Natural killer cell (primary cell): ENCODE measurements at regions of chr5 and their contacts with region 1.

Region 1: GRCh38 chr5:102865510-102866236 is 110.6 kb downstream of the PAM start:
- DNase-seq: peak; percentile 58 to 71
- ATAC-seq: peak; percentile 86 to 91 (median 88)
- H3K4me3 ChIP-seq: peak overlapping the region; percentile 85
- H3K4me3 Mint-ChIP-seq: peak overlapping the region; percentile 90
- H3K27ac ChIP-seq: peak overlapping the region; percentile 80
- H3K27ac Mint-ChIP-seq: peak overlapping the region; percentile 86 to 90
- H3K4me1 ChIP-seq: peaks cover 4% of the 10 kb centered on the region
- H3K4me1 Mint-ChIP-seq: peaks cover 28 to 50% of the 10 kb centered on the region in 2 donors
- H3K27me3 ChIP-seq: no peaks in the 10 kb centered on the region
- H3K27me3 Mint-ChIP-seq: no peaks in the 10 kb centered on the region
- CTCF ChIP-seq: no peak

Region 2: DNA sequence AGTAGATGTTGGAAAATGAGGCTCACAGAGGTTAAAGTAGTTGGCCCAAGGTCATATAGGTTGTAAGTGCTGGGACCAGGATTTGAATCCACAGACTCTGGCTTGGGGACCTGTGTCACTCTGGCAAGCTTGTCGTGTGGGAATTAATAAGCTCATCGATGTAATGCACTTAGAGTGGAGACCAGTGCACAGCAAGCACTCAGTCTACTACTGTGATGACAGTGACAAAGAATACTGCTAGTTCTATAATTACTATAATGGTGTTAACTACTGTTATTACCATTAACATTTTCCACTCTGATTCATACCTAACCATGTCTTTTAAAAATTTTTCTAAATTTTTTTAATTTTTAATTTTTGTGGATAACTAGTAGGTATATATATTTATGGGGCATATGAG is 97.8 kb before region 1 on chr5:
- intact Hi-C with region 1: no loop called
- DNase-seq: no peak
- ATAC-seq: no peak
- H3K4me3 ChIP-seq: no peak overlapping the region
- H3K4me3 Mint-ChIP-seq: no peak overlapping the region
- H3K27ac ChIP-seq: no peak overlapping the region
- H3K27ac Mint-ChIP-seq: no peak overlapping the region
- H3K4me1 ChIP-seq: peaks cover 21% of the 10 kb centered on the region
- H3K4me1 Mint-ChIP-seq: peaks cover 50 to 52% of the 10 kb centered on the region in 2 donors
- H3K27me3 ChIP-seq: no peaks in the 10 kb centered on the region
- H3K27me3 Mint-ChIP-seq: no peaks in the 10 kb centered on the region
- CTCF ChIP-seq: no peak

Region 3: DNA sequence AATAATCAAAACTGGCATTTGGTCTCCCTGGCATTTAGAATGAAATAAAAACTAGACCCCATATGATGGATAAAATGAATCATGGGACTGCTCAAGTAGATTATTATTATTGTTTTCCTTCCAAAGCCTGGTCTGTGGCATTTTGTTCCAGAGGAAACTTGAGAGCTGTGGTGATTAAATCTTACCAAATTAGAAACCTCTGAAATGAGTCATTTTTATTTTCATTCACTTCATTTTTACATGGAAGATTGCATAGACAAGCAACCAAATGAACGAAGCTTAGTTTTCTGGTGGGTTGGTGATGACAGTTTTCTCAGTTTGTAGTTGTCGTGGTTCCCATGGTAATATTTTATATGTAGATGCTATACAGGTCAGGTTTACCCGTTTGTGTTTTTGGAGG is 87.2 kb before region 1 on chr5:
- intact Hi-C with region 1: loop called (anchors 5 kb)
- DNase-seq: no peak
- ATAC-seq: no peak
- H3K4me3 ChIP-seq: no peak overlapping the region
- H3K4me3 Mint-ChIP-seq: no peak overlapping the region
- H3K27ac ChIP-seq: no peak overlapping the region
- H3K27ac Mint-ChIP-seq: peak overlapping the region in 1 of 2 donors; percentile 23
- H3K4me1 ChIP-seq: peaks cover under 1% of the 10 kb centered on the region
- H3K4me1 Mint-ChIP-seq: peaks cover 36 to 56% of the 10 kb centered on the region in 2 donors
- H3K27me3 ChIP-seq: no peaks in the 10 kb centered on the region
- H3K27me3 Mint-ChIP-seq: no peaks in the 10 kb centered on the region
- CTCF ChIP-seq: no peak

Region 4: GRCh38 chr5:102834438-102834964 is 31.2 kb before region 1 on chr5:
- intact Hi-C with region 1: loop called (anchors 2 kb)
- DNase-seq: no peak
- ATAC-seq: peak in 1 of 3 donors; percentile 37
- H3K4me3 ChIP-seq: no peak overlapping the region
- H3K4me3 Mint-ChIP-seq: peak overlapping the region; percentile 35
- H3K27ac ChIP-seq: no peak overlapping the region
- H3K27ac Mint-ChIP-seq: peak overlapping the region; percentile 5 to 64
- H3K4me1 ChIP-seq: peaks cover 15% of the 10 kb centered on the region
- H3K4me1 Mint-ChIP-seq: peaks cover 53 to 59% of the 10 kb centered on the region in 2 donors
- H3K27me3 ChIP-seq: no peaks in the 10 kb centered on the region
- H3K27me3 Mint-ChIP-seq: no peaks in the 10 kb centered on the region
- CTCF ChIP-seq: no peak

Region 5: DNA sequence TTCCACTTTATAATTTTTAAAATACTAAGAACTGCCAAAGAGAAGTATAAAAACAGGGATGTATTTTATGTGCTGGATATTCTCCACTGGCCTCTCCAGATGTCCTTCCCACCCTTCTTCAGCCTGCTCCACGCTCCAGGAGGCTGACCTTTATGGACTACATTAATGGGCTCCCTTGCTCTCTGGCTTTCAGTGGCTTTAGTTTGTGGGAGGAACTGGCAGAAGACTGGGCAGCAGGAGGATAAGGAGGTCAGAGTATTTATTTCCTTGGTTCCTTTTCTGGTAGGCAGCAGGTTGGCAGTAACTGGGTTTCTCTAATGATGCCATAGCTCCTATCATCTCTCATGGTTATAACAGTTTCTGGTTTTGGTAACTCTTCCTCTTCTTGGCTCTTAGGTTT is 23.4 kb after region 1 on chr5:
- intact Hi-C with region 1: loop called (anchors 2 kb)
- DNase-seq: no peak
- ATAC-seq: peak in 2 of 3 donors; percentile 24 to 29
- H3K4me3 ChIP-seq: no peak overlapping the region
- H3K4me3 Mint-ChIP-seq: peak overlapping the region; percentile 69
- H3K27ac ChIP-seq: peak overlapping the region; percentile 71
- H3K27ac Mint-ChIP-seq: peak overlapping the region; percentile 83 to 90
- H3K4me1 ChIP-seq: peaks cover 24% of the 10 kb centered on the region
- H3K4me1 Mint-ChIP-seq: peaks cover 56 to 61% of the 10 kb centered on the region in 2 donors
- H3K27me3 ChIP-seq: no peaks in the 10 kb centered on the region
- H3K27me3 Mint-ChIP-seq: no peaks in the 10 kb centered on the region
- CTCF ChIP-seq: no peak

Region 6: DNA sequence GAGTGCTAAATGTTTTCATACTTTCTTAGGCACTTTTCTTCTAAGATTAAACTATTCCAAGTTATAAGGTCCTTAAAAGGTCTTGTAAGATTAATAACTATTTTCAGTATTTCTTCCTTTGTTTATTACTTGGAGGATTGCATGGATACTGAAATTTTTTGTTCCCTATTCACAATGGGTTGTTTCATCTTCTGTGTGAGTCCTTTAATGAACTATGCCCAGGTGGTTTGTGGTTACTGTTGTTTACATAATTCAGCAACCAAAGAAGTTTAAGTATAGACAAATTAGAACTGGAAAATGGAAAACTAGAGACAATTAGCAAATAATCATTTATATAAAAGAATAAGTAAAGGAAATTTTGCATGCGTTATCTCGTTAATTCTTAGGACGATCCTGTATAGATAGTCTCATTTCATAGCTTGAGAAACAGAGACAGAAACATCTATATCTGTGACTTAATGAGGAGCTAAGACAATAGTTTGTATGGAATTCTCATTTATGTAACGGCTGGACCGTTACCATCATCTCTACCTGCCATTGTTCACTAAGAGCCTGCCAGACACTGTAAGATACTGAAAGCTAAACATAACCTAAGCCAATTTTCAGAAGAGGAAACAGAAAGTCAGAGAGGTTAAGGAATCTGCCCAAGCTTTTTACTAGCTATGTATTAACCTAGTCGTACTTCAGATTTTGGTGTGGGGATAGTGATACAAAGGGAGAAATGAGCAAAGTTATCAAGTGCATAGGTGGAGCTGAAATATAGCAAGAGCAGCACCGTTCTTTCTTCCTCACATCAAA is 37.6 kb after region 1 on chr5:
- intact Hi-C with region 1: no loop called
- DNase-seq: no peak
- ATAC-seq: no peak
- H3K4me3 ChIP-seq: no peak overlapping the region
- H3K4me3 Mint-ChIP-seq: no peak overlapping the region
- H3K27ac ChIP-seq: no peak overlapping the region
- H3K27ac Mint-ChIP-seq: peak overlapping the region; percentile 6 to 81
- H3K4me1 ChIP-seq: no peaks in the 10 kb centered on the region
- H3K4me1 Mint-ChIP-seq: peaks cover 27 to 46% of the 10 kb centered on the region in 2 donors
- H3K27me3 ChIP-seq: no peaks in the 10 kb centered on the region
- H3K27me3 Mint-ChIP-seq: no peaks in the 10 kb centered on the region
- CTCF ChIP-seq: no peak

Region 7: GRCh38 chr5:102971697-102972293 is 106.1 kb after region 1 on chr5:
- intact Hi-C with region 1: loop called (anchors 10 kb)
- DNase-seq: peak in 1 of 2 donors; percentile 35
- ATAC-seq: peak; percentile 63 to 67 (median 67)
- H3K4me3 ChIP-seq: no peak overlapping the region
- H3K4me3 Mint-ChIP-seq: no peak overlapping the region
- H3K27ac ChIP-seq: no peak overlapping the region
- H3K27ac Mint-ChIP-seq: peak overlapping the region in 1 of 2 donors; percentile 38
- H3K4me1 ChIP-seq: no peaks in the 10 kb centered on the region
- H3K4me1 Mint-ChIP-seq: peaks cover 9 to 16% of the 10 kb centered on the region in 2 donors
- H3K27me3 ChIP-seq: no peaks in the 10 kb centered on the region
- H3K27me3 Mint-ChIP-seq: no peaks in the 10 kb centered on the region
- CTCF ChIP-seq: peak; percentile 35

Region 8: GRCh38 chr5:103119765-103120606 is 254.3 kb after region 1 on chr5 and contains the starts of genes GIN1 and PPIP5K2:
- intact Hi-C with region 1: loop called (anchors 10 kb)
- DNase-seq: peak; percentile 95 to 99
- ATAC-seq: peak; percentile 91 to 99 (median 92)
- H3K4me3 ChIP-seq: peak within 1 kb of the TSS; percentile 88
- H3K4me3 Mint-ChIP-seq: peak within 1 kb of the TSS; percentile 97
- H3K27ac ChIP-seq: peak within 1 kb of the TSS; percentile 96
- H3K27ac Mint-ChIP-seq: peak within 1 kb of the TSS; percentile 99
- H3K4me1 ChIP-seq: peaks cover 6% of the 10 kb centered on the region
- H3K4me1 Mint-ChIP-seq: peaks cover 53 to 54% of the 10 kb centered on the region in 2 donors
- H3K27me3 ChIP-seq: no peaks in the 10 kb centered on the region
- H3K27me3 Mint-ChIP-seq: no peaks in the 10 kb centered on the region
- CTCF ChIP-seq: no peak
- total RNA-seq, gene GIN1: 3.3 to 3.6 (median 3.4) TPM
- total RNA-seq, gene PPIP5K2: 71.4 to 85.3 (median 72.8) TPM